Activated CD4-positive, alpha-beta T cell treated with anti-CD3 and anti-CD28 coated beads, Interleukin-2, amount 10 ng/mL, durations not matched to agents 24 days and 14 days (primary cell): ENCODE measurements at regions of chr9 and their contacts with region 1.

Region 1: GRCh38 chr9:132240753-132241493 is 79.1 kb downstream of the NTNG2 start:
- DNase-seq: peak; percentile 99
- H3K4me3 Mint-ChIP-seq: peak overlapping the region; percentile 95
- H3K27ac Mint-ChIP-seq: peak overlapping the region; percentile 90
- H3K4me1 Mint-ChIP-seq: peaks cover 14% of the 10 kb centered on the region
- H3K27me3 Mint-ChIP-seq: peaks cover 25% of the 10 kb centered on the region

Region 2: GRCh38 chr9:131755541-131756198 is 485.3 kb before region 1 on chr9:
- intact Hi-C with region 1: loop called (anchors 2 kb)
- DNase-seq: peak; percentile 96
- H3K4me3 Mint-ChIP-seq: peak overlapping the region; percentile 1
- H3K27ac Mint-ChIP-seq: no peak overlapping the region
- H3K4me1 Mint-ChIP-seq: peaks cover 6% of the 10 kb centered on the region
- H3K27me3 Mint-ChIP-seq: peaks cover 15% of the 10 kb centered on the region

Region 3: DNA sequence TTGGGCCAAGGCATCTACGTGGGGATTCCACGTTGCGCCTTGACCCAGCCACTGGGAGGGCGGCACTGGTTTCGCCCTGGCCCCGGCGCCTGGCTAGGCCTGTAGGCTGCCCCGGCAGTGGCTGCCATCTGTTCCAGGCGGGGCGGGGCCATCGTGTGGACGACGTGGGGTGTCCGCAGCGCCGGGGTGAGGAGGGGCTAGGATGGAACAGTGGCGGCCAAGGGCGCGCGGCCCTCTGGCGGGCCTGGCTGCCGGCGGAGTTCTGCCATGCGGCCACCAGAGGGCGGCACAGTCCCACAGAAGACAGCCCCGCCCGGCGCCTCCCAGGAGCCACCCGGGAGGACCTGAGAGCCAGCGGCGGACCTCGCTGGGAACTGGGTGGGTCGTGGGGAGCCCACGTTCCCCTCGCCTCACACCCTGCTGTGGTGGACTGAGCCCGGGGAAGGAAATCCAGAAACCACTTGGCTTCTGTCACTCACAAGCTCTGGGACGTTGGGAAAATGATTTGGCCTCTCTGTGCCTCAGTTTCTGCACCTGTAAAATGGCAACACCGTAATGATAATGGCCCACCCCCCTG is 478.5 kb before region 1 on chr9:
- intact Hi-C with region 1: loop called (anchors 1 kb)
- DNase-seq: peak; percentile 94
- H3K4me3 Mint-ChIP-seq: no peak overlapping the region
- H3K27ac Mint-ChIP-seq: no peak overlapping the region
- H3K4me1 Mint-ChIP-seq: peaks cover 2% of the 10 kb centered on the region
- H3K27me3 Mint-ChIP-seq: peaks cover 28% of the 10 kb centered on the region

Region 4: DNA sequence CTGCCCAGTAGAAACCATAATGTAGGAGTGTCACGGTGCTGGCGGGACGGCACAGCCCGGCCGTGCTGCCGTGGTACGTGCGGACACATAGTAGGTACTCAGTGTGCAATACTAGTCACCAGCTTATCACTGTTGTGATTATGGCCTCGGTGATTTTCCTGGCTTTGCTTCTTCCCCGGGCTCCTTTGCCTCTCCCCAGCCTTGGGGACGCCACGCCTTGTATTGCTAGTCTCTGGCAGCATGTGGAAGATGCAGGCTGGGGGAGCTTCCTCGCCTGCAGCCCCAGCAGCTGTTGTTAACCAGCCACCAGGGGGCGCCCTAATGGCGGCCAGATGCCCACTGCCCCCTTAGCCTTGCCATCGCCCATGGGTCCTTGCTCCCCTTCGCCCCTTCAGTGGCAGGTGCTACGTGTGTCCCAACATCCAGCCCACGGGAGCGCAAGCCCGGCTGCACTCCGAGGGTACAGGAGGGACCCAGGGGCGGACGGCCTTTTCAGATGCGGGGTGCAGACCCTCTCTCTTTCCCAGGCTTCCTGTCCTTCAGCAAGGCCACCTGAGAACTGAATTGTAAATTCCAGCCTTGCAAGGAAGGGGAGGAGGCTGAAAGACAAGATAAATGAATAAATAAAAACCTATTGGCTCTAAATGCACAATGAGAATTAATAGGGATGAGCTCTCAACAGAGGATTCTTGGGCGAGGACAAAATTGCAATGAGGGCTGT is 71.1 kb before region 1 on chr9:
- intact Hi-C with region 1: loop called (anchors 1 kb)
- DNase-seq: peak; percentile 88
- H3K4me3 Mint-ChIP-seq: no peak overlapping the region
- H3K27ac Mint-ChIP-seq: no peak overlapping the region
- H3K4me1 Mint-ChIP-seq: peaks cover under 1% of the 10 kb centered on the region
- H3K27me3 Mint-ChIP-seq: peaks cover 18% of the 10 kb centered on the region